CD8-positive, alpha-beta T cell (primary cell): ENCODE measurements at regions of chr7 and their contacts with region 1.

Region 1: GRCh38 chr7:93442478-93443224 is 131.9 kb downstream of the CALCR start:
- DNase-seq: peak in 6 of 9 experiments; percentile 9 to 45 (median 25)
- ATAC-seq: peak; percentile 54
- H3K4me3 ChIP-seq: no peak overlapping the region
- H3K4me3 Mint-ChIP-seq: no peak overlapping the region
- H3K27ac ChIP-seq: no peak overlapping the region
- H3K27ac Mint-ChIP-seq: no peak overlapping the region
- H3K4me1 ChIP-seq: no peaks in the 10 kb centered on the region
- H3K4me1 Mint-ChIP-seq: no peaks in the 10 kb centered on the region
- H3K27me3 ChIP-seq: no peaks in the 10 kb centered on the region
- H3K27me3 Mint-ChIP-seq: no peaks in the 10 kb centered on the region
- CTCF ChIP-seq: peak; percentile 52

Region 2: DNA sequence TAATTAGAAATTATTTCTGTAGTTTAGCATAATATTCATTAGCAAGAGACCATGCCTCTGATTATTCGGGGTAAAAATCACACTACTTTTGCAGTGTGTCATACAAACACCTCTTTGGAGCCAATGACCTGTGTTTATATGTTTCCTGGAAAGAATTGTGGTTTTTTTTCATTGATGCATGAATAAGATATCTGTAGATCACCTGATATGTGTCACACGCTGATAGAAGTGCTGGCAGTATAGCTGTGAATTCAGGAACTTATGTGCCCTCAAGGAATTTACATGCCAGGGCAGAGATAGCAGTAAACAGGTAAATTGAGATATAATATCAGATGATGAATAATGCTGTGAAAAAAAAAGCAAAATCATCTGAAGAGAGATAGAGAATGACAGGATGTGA is 92.3 kb before region 1 on chr7:
- CTCF ChIA-PET with region 1: no interaction called
- POLR2A ChIA-PET with region 1: no interaction called
- intact Hi-C with region 1: no loop called
- DNase-seq: no peak
- ATAC-seq: no peak
- H3K4me3 ChIP-seq: no peak overlapping the region
- H3K4me3 Mint-ChIP-seq: no peak overlapping the region
- H3K27ac ChIP-seq: no peak overlapping the region
- H3K27ac Mint-ChIP-seq: peak overlapping the region; percentile 19
- H3K4me1 ChIP-seq: no peaks in the 10 kb centered on the region
- H3K4me1 Mint-ChIP-seq: no peaks in the 10 kb centered on the region
- H3K27me3 ChIP-seq: no peaks in the 10 kb centered on the region
- H3K27me3 Mint-ChIP-seq: no peaks in the 10 kb centered on the region
- CTCF ChIP-seq: no peak

Region 3: GRCh38 chr7:93414628-93415027 is 28.0 kb before region 1 on chr7:
- CTCF ChIA-PET with region 1: no interaction called
- POLR2A ChIA-PET with region 1: no interaction called
- intact Hi-C with region 1: no loop called
- DNase-seq: no peak
- ATAC-seq: no peak
- H3K4me3 ChIP-seq: no peak overlapping the region
- H3K4me3 Mint-ChIP-seq: no peak overlapping the region
- H3K27ac ChIP-seq: no peak overlapping the region
- H3K27ac Mint-ChIP-seq: no peak overlapping the region
- H3K4me1 ChIP-seq: no peaks in the 10 kb centered on the region
- H3K4me1 Mint-ChIP-seq: no peaks in the 10 kb centered on the region
- H3K27me3 ChIP-seq: no peaks in the 10 kb centered on the region
- H3K27me3 Mint-ChIP-seq: peaks cover 2% of the 10 kb centered on the region
- CTCF ChIP-seq: no peak

Region 4: DNA sequence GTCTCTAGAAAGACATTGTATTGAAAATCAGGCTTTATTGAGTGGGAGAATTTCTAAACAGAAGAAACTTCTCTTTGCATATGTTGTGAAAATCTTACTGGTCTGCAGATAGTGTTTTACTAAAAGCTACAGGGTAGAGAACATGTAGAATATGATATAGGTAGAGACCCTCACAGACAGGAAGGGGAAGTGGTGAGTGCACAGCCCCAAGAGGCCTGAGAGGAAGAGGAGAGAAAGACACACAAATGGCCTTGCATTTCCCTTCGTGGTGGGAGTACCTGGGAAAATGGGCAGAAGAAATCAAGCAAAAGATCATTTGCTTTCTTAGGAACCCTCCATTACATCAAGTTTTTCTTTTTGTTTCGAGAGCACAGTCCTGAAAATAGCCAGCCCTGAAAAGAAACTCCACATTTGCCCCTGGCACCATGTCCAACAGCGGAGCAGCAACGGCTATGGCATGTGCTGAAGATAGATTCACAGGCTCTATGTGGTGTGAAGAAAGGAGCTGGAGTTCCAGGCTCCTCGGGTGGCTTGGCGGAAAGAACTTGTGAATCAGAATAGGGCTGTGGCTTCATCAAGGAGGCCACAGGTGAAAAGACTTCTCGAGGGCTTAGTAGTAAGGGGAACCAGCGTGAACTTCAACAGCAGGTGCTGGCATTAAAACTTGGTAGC is 11.6 kb before region 1 on chr7:
- CTCF ChIA-PET with region 1: interaction called, 10 read pairs
- POLR2A ChIA-PET with region 1: no interaction called
- intact Hi-C with region 1: no loop called
- DNase-seq: peak in 2 of 9 experiments; percentile 8 to 9
- ATAC-seq: no peak
- H3K4me3 ChIP-seq: no peak overlapping the region
- H3K4me3 Mint-ChIP-seq: peak overlapping the region; percentile 2
- H3K27ac ChIP-seq: peak overlapping the region in 1 of 2 experiments; percentile 21
- H3K27ac Mint-ChIP-seq: peak overlapping the region; percentile 38
- H3K4me1 ChIP-seq: peaks cover 10% of the 10 kb centered on the region
- H3K4me1 Mint-ChIP-seq: peaks cover 32% of the 10 kb centered on the region
- H3K27me3 ChIP-seq: no peaks in the 10 kb centered on the region
- H3K27me3 Mint-ChIP-seq: no peaks in the 10 kb centered on the region
- CTCF ChIP-seq: no peak